Heart left ventricle (tissue), 16 donors: ENCODE measurements at regions of chr3 and their contacts with region 1.

Region 1: DNA sequence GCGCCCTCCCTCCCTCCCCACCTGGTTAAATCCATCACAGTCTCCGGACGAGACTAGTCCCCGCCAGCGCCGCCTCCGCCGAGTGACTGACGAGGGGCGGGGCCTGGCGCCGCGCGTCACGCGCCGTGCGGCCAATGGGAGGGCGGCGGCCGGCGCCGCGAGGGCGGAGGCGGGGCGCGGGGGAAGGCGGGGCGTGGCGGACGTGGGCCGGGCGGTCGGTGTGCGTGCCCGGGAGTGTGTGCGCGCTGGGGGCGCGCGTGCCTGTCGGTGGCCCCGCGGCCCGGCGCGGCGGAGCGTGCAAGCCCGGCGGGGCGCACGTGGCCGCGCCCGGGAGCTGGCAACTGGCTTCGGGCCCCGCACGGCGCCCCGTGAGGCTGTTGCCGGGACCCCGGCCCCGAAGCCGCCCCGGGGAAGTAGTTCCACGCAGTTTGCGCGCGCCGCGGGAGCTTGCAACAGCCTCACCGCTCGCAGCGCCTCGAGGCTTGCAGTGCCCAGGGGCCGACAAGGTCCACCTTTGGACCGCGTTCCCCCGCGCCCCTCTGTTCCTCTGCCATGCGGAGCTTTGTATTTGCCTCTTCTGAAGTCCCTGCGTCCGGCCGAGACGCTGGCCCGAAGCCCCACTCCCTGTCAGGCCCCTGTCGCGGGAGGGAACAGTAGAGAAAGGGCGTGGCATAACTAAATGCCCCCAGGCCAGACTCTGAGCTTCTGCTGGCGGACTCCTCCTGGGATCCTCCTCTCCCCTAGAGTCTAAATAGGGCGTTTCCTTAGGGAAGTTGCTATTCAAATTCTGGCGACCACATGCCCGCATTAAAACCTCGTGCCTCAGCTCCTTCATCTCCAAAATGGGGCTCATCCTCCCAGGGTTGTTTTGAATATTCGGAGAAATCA is 400.9 kb downstream of the SHQ1 start:
- DNase-seq: peak; percentile 94 to 97 (median 95)
- ATAC-seq: peak; percentile 88 to 99 (median 98)
- H3K4me3 ChIP-seq: peak overlapping the region; percentile 48 to 97 (median 82)
- H3K27ac ChIP-seq: peak overlapping the region; percentile 66 to 92 (median 88)
- H3K4me1 ChIP-seq: peaks cover 0 to 39% (median 25%) of the 10 kb centered on the region in 12 donors
- H3K27me3 ChIP-seq: no peaks in the 10 kb centered on the region
- CTCF ChIP-seq: peak in 2 of 12 donors; percentile 5 to 8
- POLR2A ChIP-seq: no peak

Region 2: DNA sequence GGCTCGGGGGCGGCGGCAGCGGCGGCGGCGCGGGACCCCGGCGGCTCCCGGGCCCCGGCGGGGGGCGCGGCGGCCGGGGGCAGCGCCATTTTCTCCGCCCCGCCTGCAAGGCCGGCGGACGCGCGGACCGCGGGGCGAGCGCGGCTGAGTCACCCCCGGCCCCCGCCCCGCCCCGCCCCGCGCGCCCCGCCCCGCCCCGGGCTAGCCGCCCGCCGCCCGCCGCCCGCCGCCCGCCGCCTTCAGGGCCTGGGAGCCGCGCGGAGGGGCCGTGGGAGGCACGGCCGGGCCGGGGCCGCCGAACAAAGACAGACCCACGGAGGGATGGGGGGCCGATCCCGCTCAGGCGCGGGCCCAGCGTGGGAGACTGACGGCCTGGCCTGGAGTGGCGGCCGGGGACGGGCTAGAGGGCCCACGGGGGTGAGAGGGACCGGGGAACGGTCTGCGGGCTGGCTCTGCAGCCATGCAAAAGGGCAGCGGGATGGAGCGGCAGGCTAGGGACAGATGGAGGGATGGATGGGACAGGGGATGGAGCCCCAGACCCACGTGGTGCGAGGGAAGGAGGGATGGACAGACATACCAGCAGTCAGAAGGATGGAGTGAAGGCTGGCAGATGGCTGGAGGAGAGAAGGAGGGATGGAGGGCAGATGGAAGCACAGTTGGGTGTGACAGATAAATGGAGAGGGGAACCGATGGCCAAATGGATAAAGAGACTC is 721.9 kb before region 1 on chr3 and contains the start of gene EIF4E3:
- intact Hi-C with region 1: loop called in 1 of 10 experiments (anchors 10 kb)
- DNase-seq: peak; percentile 40 to 76 (median 46)
- ATAC-seq: peak; percentile 15 to 75 (median 64)
- H3K4me3 ChIP-seq: peak within 1 kb of the TSS; percentile 73 to 96 (median 86)
- H3K27ac ChIP-seq: peak within 1 kb of the TSS; percentile 25 to 89 (median 75)
- H3K4me1 ChIP-seq: peaks cover 0 to 58% (median 12%) of the 10 kb centered on the region in 12 donors
- H3K27me3 ChIP-seq: no peaks in the 10 kb centered on the region
- CTCF ChIP-seq: no peak
- POLR2A ChIP-seq: no peak
- total RNA-seq, gene EIF4E3: 28.5 to 53.0 (median 47.1) TPM

Region 3: DNA sequence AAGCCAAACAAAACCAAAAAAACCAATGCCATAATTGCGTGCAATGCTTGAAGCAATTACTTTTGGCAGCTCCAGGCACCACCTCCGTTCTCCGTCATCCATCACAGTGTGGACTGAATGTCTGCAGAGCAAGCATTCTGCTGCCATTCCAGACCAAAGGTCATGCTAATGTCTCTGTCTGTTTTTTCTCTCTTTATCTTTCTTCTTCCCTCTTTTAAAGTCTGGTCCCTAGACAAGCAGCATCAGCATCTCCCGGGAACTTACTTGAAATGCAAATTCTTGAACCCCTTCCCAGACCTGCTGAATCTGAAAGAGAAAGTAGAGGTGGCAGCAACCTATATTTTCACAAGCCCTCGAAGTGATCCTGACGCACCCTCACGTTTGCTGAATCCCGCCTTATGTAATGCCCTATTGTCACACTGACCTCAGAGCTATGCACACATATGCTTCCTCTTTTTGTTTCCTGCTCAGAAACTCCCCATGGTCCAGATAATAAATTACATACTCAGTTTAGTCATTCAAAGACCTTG is 365.1 kb before region 1 on chr3:
- intact Hi-C with region 1: no loop called
- DNase-seq: peak in 1 of 5 donors; percentile 37
- ATAC-seq: peak; percentile 58 to 86 (median 70)
- H3K4me3 ChIP-seq: no peak overlapping the region
- H3K27ac ChIP-seq: peak overlapping the region in 1 of 12 donors; percentile 81
- H3K4me1 ChIP-seq: peaks cover 0 to 71% (median 0%) of the 10 kb centered on the region in 12 donors
- H3K27me3 ChIP-seq: no peaks in the 10 kb centered on the region
- CTCF ChIP-seq: no peak
- POLR2A ChIP-seq: no peak

Region 4: GRCh38 chr3:72100601-72101187 is 346.6 kb before region 1 on chr3:
- intact Hi-C with region 1: no loop called
- DNase-seq: peak; percentile 83 to 94 (median 85)
- ATAC-seq: peak; percentile 66 to 90 (median 81)
- H3K4me3 ChIP-seq: peak overlapping the region in 10 of 12 donors; percentile 9 to 51 (median 42)
- H3K27ac ChIP-seq: peak overlapping the region in 3 of 12 donors; percentile 24 to 88 (median 37)
- H3K4me1 ChIP-seq: peaks cover 0 to 44% (median 14%) of the 10 kb centered on the region in 12 donors
- H3K27me3 ChIP-seq: peaks cover 0 to 26% (median 3%) of the 10 kb centered on the region in 9 donors
- CTCF ChIP-seq: no peak
- POLR2A ChIP-seq: no peak

Region 5: GRCh38 chr3:72152551-72153476 is 294.5 kb before region 1 on chr3:
- intact Hi-C with region 1: loop called in 1 of 10 experiments (anchors 10 kb)
- DNase-seq: peak; percentile 72 to 84 (median 80)
- ATAC-seq: peak; percentile 78 to 90 (median 84)
- H3K4me3 ChIP-seq: peak overlapping the region in 10 of 12 donors; percentile 3 to 38 (median 26)
- H3K27ac ChIP-seq: peak overlapping the region in 10 of 12 donors; percentile 17 to 72 (median 50)
- H3K4me1 ChIP-seq: peaks cover 0 to 29% (median 13%) of the 10 kb centered on the region in 12 donors
- H3K27me3 ChIP-seq: no peaks in the 10 kb centered on the region
- CTCF ChIP-seq: no peak
- POLR2A ChIP-seq: no peak

Region 6: GRCh38 chr3:72329354-72329753 is 117.9 kb before region 1 on chr3:
- intact Hi-C with region 1: loop called in 3 of 10 experiments (anchors 10 kb)
- DNase-seq: peak in 4 of 5 donors; percentile 50 to 68 (median 63)
- ATAC-seq: peak; percentile 67 to 84 (median 76)
- H3K4me3 ChIP-seq: no peak overlapping the region
- H3K27ac ChIP-seq: peak overlapping the region in 1 of 12 donors; percentile 17
- H3K4me1 ChIP-seq: peaks cover 0 to 27% (median 11%) of the 10 kb centered on the region in 12 donors
- H3K27me3 ChIP-seq: no peaks in the 10 kb centered on the region
- CTCF ChIP-seq: no peak
- POLR2A ChIP-seq: no peak

Region 7: GRCh38 chr3:72380193-72380592 is 67.1 kb before region 1 on chr3:
- intact Hi-C with region 1: no loop called
- DNase-seq: no peak
- ATAC-seq: peak in 2 of 4 donors; percentile 31 to 36
- H3K4me3 ChIP-seq: no peak overlapping the region
- H3K27ac ChIP-seq: no peak overlapping the region
- H3K4me1 ChIP-seq: peaks cover 0 to 60% (median 30%) of the 10 kb centered on the region in 12 donors
- H3K27me3 ChIP-seq: no peaks in the 10 kb centered on the region
- CTCF ChIP-seq: no peak
- POLR2A ChIP-seq: no peak

Region 8: DNA sequence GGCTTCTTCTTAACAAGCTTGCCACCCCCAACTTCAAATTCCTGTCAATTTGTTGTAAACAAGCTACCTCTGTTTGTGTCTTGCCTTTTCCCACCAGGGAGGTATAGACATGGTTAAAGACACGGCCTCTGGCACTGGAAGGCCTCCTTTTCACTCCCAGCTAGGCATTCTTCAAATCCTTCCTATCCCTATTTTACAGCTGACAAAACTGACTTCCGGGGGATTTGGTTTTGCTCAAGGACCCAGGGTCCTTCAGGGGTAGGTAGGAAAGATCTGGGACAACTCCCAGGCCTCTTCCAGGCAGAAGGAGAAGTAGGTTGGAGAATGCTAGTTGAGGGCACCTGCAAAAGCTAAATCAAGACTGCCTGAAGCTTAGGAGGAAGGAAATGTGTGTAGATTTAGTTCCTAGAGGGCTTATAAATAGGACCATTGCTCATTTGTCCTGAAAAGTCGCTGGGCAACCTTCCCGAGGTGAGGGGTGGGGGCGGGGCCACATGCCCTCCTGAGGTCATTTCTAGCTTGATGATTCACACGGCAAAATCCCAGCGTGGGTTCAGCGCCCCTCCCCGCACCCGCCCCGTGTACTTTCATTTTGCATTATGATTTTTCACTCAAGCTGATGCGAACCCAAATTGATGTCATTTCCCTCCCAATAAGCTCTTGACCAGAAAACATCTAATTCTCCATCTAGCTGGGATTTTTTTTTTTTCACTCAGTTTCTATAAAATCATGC is 35.5 kb after region 1 on chr3:
- intact Hi-C with region 1: loop called in 1 of 10 experiments (anchors 5 kb)
- DNase-seq: peak; percentile 68 to 82 (median 74)
- ATAC-seq: peak; percentile 74 to 94 (median 88)
- H3K4me3 ChIP-seq: peak overlapping the region in 10 of 12 donors; percentile 14 to 52 (median 37)
- H3K27ac ChIP-seq: peak overlapping the region in 10 of 12 donors; percentile 50 to 88 (median 67)
- H3K4me1 ChIP-seq: peaks cover 0 to 40% (median 25%) of the 10 kb centered on the region in 12 donors
- H3K27me3 ChIP-seq: no peaks in the 10 kb centered on the region
- CTCF ChIP-seq: no peak
- POLR2A ChIP-seq: no peak